Endothelial cell of umbilical vein (primary cell): ENCODE measurements at regions of chr7 and their contacts with region 1.

Region 1: GRCh38 chr7:115851291-115851690 is 179.3 kb downstream of the TFEC start:
- DNase-seq: peak; percentile 66
- H3K4me3 ChIP-seq: no peak overlapping the region
- H3K27ac ChIP-seq: no peak overlapping the region
- H3K4me1 ChIP-seq: no peaks in the 10 kb centered on the region
- H3K27me3 ChIP-seq: peaks cover 0 to 2% of the 10 kb centered on the region in 2 experiments
- CTCF ChIP-seq: peak; percentile 9 to 12
- POLR2A ChIP-seq: no peak

Region 2: DNA sequence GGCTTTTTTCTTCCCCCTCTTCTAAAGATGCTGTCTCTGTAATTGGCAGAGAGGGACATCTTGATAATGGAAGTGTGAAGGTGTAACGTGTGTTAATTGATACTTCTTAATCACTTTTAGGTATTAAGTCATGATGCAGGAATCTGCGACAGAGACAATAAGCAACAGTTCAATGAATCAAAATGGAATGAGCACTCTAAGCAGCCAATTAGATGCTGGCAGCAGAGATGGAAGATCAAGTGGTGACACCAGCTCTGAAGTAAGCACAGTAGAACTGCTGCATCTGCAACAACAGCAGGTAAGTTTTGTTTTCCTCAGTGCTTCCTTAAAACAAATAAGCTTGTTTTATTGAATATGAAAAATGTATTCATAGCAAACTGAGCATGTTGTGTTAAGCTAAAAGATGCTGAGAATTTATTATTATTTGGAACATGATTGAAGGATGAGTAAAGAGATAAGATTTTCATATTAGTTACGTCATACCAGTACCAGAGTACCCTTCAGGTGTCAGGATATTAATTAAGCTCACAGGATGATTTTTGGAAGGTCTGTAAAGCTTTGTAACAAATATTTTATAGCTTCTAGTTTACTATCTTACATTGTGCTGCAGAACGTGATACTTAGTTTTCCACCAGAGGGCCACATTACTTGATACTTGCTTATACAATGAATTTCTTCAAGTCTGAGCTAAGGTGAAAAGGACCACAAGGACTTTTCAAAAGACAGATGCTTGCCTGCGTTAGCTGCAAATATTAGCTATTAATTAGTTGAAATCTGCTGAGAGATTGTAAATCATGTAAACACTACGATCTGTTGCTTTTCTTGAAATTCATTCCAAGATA is 1424.7 kb before region 1 on chr7:
- CTCF ChIA-PET with region 1: interaction called, 59 read pairs
- POLR2A ChIA-PET with region 1: no interaction called
- dilution Hi-C with region 1: no loop called
- intact Hi-C with region 1: loop called (anchors 10 kb)
- DNase-seq: peak; percentile 49
- H3K4me3 ChIP-seq: no peak overlapping the region
- H3K27ac ChIP-seq: no peak overlapping the region
- H3K4me1 ChIP-seq: no peaks in the 10 kb centered on the region
- H3K27me3 ChIP-seq: no peaks in the 10 kb centered on the region
- CTCF ChIP-seq: peak in 1 of 2 donors; percentile 29
- POLR2A ChIP-seq: no peak

Region 3: GRCh38 chr7:115217373-115217772 is 633.9 kb before region 1 on chr7:
- CTCF ChIA-PET with region 1: interaction called, 11 read pairs
- POLR2A ChIA-PET with region 1: no interaction called
- dilution Hi-C with region 1: no loop called
- intact Hi-C with region 1: no loop called
- DNase-seq: peak; percentile 22
- H3K4me3 ChIP-seq: no peak overlapping the region
- H3K27ac ChIP-seq: no peak overlapping the region
- H3K4me1 ChIP-seq: no peaks in the 10 kb centered on the region
- H3K27me3 ChIP-seq: peaks cover 0 to 3% of the 10 kb centered on the region in 2 experiments
- CTCF ChIP-seq: peak in 1 of 2 donors; percentile 8
- POLR2A ChIP-seq: no peak

Region 4: GRCh38 chr7:115679976-115680375 is 171.3 kb before region 1 on chr7:
- CTCF ChIA-PET with region 1: interaction called, 19 read pairs
- POLR2A ChIA-PET with region 1: no interaction called
- dilution Hi-C with region 1: no loop called
- intact Hi-C with region 1: no loop called
- DNase-seq: peak; percentile 45
- H3K4me3 ChIP-seq: no peak overlapping the region
- H3K27ac ChIP-seq: no peak overlapping the region
- H3K4me1 ChIP-seq: no peaks in the 10 kb centered on the region
- H3K27me3 ChIP-seq: no peaks in the 10 kb centered on the region
- CTCF ChIP-seq: peak; percentile 19 to 55
- POLR2A ChIP-seq: no peak

Region 5: DNA sequence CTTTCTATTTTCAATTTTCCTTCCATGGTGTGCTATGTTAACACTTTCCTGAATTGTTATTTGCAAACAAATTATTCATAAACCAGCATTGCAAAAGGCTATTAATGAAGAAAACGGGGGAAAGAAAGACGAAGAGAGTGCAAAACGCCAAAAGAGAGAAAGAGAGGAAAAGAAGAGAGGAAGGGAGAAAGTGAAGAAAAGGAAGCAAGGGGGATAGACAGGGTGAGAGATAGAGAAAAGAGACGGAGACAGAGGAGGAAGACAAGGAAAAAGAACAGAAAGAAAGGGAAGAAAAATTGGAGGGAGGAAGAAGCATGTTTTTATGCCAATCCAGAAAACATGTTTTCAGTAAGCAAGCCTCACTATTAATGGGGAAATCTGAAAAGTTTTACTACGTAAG is 131.3 kb before region 1 on chr7:
- CTCF ChIA-PET with region 1: no interaction called
- POLR2A ChIA-PET with region 1: no interaction called
- dilution Hi-C with region 1: no loop called
- intact Hi-C with region 1: no loop called
- DNase-seq: no peak
- H3K4me3 ChIP-seq: no peak overlapping the region
- H3K27ac ChIP-seq: no peak overlapping the region
- H3K4me1 ChIP-seq: no peaks in the 10 kb centered on the region
- H3K27me3 ChIP-seq: no peaks in the 10 kb centered on the region
- CTCF ChIP-seq: no peak
- POLR2A ChIP-seq: no peak

Region 6: DNA sequence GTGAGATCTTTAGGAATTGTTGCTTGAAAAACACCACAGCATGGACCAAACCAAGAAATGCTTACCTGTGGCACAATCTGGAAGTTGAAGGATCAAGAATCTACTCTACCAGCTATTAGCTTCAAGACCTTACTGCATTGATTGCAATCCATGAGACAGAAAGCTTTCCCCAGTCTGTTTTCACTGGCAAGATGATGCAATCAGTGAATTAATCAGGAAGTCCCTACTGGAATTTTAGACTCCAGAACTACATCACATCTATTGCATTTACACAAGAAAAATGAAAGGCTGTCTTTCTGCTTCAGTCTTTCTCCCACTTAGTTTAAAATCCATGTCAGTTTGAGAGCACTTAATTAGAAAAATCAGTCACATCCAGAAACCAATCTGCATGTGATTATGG is 12.5 kb before region 1 on chr7:
- CTCF ChIA-PET with region 1: interaction called, 10 read pairs
- POLR2A ChIA-PET with region 1: no interaction called
- dilution Hi-C with region 1: no loop called
- intact Hi-C with region 1: no loop called
- DNase-seq: no peak
- H3K4me3 ChIP-seq: no peak overlapping the region
- H3K27ac ChIP-seq: no peak overlapping the region
- H3K4me1 ChIP-seq: peaks cover 2% of the 10 kb centered on the region
- H3K27me3 ChIP-seq: peaks cover 0 to 3% of the 10 kb centered on the region in 2 experiments
- CTCF ChIP-seq: no peak
- POLR2A ChIP-seq: no peak

Region 7: DNA sequence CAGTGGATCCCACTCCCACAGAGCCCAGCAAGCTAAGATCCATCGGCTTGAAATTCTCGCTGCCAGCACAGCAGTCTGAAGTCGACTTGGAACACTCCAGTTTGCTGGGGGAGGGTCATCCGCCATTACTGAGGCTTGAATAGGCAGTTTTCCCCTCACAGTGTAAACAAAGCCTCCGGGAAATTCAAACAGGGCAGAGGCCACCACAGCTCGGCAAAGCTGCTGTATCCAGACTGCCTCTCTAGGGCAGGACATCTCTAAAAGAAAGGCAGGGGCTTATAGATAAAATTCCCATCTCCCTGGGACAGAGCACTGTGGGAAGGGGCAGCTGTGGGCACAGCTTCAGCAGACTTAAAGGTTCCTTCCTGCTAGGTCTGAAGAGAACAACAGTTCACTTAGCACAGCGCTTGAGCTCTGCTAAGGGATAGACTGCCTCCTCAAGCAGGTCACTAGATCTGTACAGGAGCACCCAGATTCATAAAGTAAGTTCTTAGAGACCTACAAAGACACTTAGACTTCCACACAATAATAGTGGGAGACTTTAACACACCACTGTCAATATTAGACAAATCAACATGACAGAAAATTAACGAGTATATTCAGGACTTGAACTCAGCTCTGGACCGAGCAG is 38.2 kb after region 1 on chr7:
- CTCF ChIA-PET with region 1: no interaction called
- POLR2A ChIA-PET with region 1: no interaction called
- dilution Hi-C with region 1: no loop called
- intact Hi-C with region 1: no loop called
- DNase-seq: no peak
- H3K4me3 ChIP-seq: no peak overlapping the region
- H3K27ac ChIP-seq: no peak overlapping the region
- H3K4me1 ChIP-seq: no peaks in the 10 kb centered on the region
- H3K27me3 ChIP-seq: no peaks in the 10 kb centered on the region
- CTCF ChIP-seq: no peak
- POLR2A ChIP-seq: no peak

Region 8: DNA sequence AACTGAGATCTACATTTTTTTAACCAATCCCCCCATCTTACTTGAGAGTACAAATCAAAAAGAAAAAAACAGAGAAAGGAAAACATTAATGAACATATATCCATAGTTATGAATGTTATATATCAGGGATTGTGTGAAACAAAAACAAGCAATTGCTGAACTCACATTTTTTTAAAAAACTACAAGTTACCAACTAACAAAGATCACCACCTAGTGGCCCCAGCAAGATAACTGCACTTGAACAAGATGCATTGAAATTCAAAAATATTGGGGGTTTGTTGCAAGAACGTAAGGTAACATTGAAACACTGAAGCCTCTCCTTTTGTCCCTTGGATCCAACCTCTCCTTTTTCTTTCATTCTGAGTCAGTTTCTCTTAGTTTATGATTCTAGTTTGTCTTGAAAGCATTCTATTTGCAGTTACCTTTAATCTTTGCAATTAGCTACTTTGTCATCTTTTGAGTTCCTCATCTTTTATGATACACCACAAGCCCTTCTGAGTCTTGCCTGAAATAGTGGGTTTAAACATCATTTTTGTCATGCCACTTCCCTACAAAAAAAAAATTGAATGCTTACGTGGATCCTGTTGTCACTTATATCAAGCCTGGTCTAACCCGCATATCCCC is 271.8 kb after region 1 on chr7:
- CTCF ChIA-PET with region 1: interaction called, 34 read pairs
- POLR2A ChIA-PET with region 1: no interaction called
- dilution Hi-C with region 1: no loop called
- intact Hi-C with region 1: loop called (anchors 1 kb)
- DNase-seq: peak; percentile 55
- H3K4me3 ChIP-seq: no peak overlapping the region
- H3K27ac ChIP-seq: no peak overlapping the region
- H3K4me1 ChIP-seq: no peaks in the 10 kb centered on the region
- H3K27me3 ChIP-seq: no peaks in the 10 kb centered on the region
- CTCF ChIP-seq: peak; percentile 58 to 64
- POLR2A ChIP-seq: no peak